ENCODE measurements at regions of chr9 and their contacts with region 1.

Region 1: GRCh38 chr9:9804109-9804508 is 808.7 kb downstream of the PTPRD start:
- DNase-seq: no peak
- H3K4me3 Mint-ChIP-seq: no peak overlapping the region
- H3K27ac Mint-ChIP-seq: no peak overlapping the region
- H3K4me1 Mint-ChIP-seq: no peaks in the 10 kb centered on the region
- H3K27me3 Mint-ChIP-seq: no peaks in the 10 kb centered on the region
- CTCF ChIP-seq: no peak

Region 2: DNA sequence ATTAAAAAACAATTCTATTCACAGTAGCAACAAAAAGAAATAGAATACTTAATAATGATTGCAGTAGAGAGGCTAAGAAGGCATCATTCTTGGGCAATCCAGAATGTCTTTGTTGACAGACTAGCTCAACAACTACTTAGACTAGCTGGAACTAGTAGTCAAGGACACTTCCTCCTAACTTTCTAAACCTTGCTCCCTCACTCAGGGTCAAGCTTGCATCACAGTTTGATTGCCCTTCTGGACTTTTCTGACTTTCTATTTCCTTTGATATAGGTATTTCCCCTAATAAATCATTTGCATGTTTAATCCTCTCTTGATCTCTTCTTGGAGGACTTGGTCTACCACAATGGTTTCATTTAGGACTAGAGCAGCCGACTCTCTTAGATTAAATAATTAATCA is 299.2 kb before region 1 on chr9:
- CTCF ChIA-PET with region 1: no interaction called
- intact Hi-C with region 1: loop called (anchors 10 kb)
- DNase-seq: no peak
- H3K4me3 Mint-ChIP-seq: no peak overlapping the region
- H3K27ac Mint-ChIP-seq: no peak overlapping the region
- H3K4me1 Mint-ChIP-seq: no peaks in the 10 kb centered on the region
- H3K27me3 Mint-ChIP-seq: no peaks in the 10 kb centered on the region
- CTCF ChIP-seq: no peak

Region 3: DNA sequence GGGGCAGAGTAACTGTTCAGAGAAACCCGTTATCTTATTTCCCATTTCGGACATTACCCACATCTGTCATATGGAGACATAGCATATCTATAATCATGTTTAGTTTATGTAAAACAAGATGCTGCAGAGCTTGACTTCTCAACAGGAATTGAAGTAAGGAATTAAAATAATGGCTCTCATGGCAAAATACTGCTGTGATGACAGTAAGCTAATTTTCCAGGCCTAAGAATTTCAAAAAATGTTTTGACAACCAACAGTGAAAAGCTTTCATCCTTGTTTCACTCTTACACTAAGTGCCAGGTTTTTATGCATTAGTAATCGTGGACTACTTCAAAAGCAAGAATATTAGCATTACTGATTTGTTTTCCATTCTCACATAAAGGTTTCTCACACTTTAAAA is 290.5 kb after region 1 on chr9:
- CTCF ChIA-PET with region 1: no interaction called
- intact Hi-C with region 1: no loop called
- DNase-seq: no peak
- H3K4me3 Mint-ChIP-seq: no peak overlapping the region
- H3K27ac Mint-ChIP-seq: no peak overlapping the region
- H3K4me1 Mint-ChIP-seq: no peaks in the 10 kb centered on the region
- H3K27me3 Mint-ChIP-seq: no peaks in the 10 kb centered on the region
- CTCF ChIP-seq: no peak